B cell (primary cell): ENCODE measurements at regions of chr3 and their contacts with region 1.

Region 1: DNA sequence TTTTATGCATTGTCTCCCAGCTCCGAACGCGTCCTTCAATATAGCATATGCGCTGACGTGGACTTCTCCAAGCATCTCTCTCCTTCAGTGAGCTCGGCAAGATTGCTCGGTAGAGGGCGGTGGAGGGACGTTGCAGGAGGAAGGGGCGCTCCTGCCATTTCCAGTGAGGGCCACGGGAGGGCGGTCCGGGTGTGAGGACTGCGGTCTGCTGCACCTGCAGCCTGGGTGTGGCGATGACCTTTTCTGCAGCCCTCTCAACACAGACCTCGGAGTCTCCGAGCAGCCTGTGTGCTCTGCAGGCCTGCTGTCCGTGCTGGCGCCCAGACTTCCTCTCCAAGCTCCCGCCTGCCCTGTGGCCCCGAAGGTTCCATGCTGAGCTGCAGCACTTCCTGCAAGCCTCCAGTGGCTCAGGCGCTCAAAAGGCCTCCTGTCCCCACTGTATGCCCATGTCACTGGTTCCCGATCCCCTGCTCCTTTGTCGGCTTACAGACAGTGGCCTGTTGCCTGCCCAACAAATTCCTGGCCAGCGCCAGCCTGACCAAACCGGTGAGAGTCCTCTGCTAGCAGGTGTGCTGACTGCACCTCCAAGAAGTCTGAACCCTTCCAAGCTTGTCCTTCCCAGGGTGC is 8.9 kb upstream of the RTP3 start:
- DNase-seq: peak; percentile 95
- ATAC-seq: peak; percentile 99
- H3K4me3 ChIP-seq: no peak overlapping the region
- H3K4me3 Mint-ChIP-seq: peak overlapping the region; percentile 67
- H3K27ac ChIP-seq: no peak overlapping the region
- H3K27ac Mint-ChIP-seq: peak overlapping the region; percentile 74
- H3K4me1 ChIP-seq: peaks cover 9 to 11% of the 10 kb centered on the region in 2 donors
- H3K4me1 Mint-ChIP-seq: peaks cover 9% of the 10 kb centered on the region
- H3K27me3 ChIP-seq: peaks cover 0 to 6% (median 4%) of the 10 kb centered on the region in 4 experiments
- H3K27me3 Mint-ChIP-seq: peaks cover 3% of the 10 kb centered on the region
- CTCF ChIP-seq: peak; percentile 100

Region 2: GRCh38 chr3:46368569-46368968 is 120.3 kb before region 1 on chr3:
- CTCF ChIA-PET with region 1: interaction called, 10 read pairs
- POLR2A ChIA-PET with region 1: no interaction called
- intact Hi-C with region 1: no loop called
- DNase-seq: peak; percentile 79
- ATAC-seq: peak; percentile 93
- H3K4me3 ChIP-seq: no peak overlapping the region
- H3K4me3 Mint-ChIP-seq: peak overlapping the region; percentile 33
- H3K27ac ChIP-seq: no peak overlapping the region
- H3K27ac Mint-ChIP-seq: peak overlapping the region; percentile 28
- H3K4me1 ChIP-seq: peaks cover 12 to 20% of the 10 kb centered on the region in 2 donors
- H3K4me1 Mint-ChIP-seq: peaks cover 32% of the 10 kb centered on the region
- H3K27me3 ChIP-seq: no peaks in the 10 kb centered on the region
- H3K27me3 Mint-ChIP-seq: no peaks in the 10 kb centered on the region
- CTCF ChIP-seq: peak; percentile 57

Region 3: GRCh38 chr3:46477145-46477544 is 11.7 kb before region 1 on chr3:
- CTCF ChIA-PET with region 1: interaction called, 15 read pairs
- POLR2A ChIA-PET with region 1: no interaction called
- intact Hi-C with region 1: no loop called
- DNase-seq: no peak
- ATAC-seq: no peak
- H3K4me3 ChIP-seq: no peak overlapping the region
- H3K4me3 Mint-ChIP-seq: no peak overlapping the region
- H3K27ac ChIP-seq: no peak overlapping the region
- H3K27ac Mint-ChIP-seq: no peak overlapping the region
- H3K4me1 ChIP-seq: no peaks in the 10 kb centered on the region
- H3K4me1 Mint-ChIP-seq: no peaks in the 10 kb centered on the region
- H3K27me3 ChIP-seq: peaks cover 0 to 14% (median 9%) of the 10 kb centered on the region in 4 experiments
- H3K27me3 Mint-ChIP-seq: peaks cover 48% of the 10 kb centered on the region
- CTCF ChIP-seq: no peak

Region 4: GRCh38 chr3:46533091-46533490 is 44.2 kb after region 1 on chr3:
- CTCF ChIA-PET with region 1: interaction called, 156 read pairs
- POLR2A ChIA-PET with region 1: interaction called, 26 read pairs
- intact Hi-C with region 1: no loop called
- DNase-seq: no peak
- ATAC-seq: no peak
- H3K4me3 ChIP-seq: no peak overlapping the region
- H3K4me3 Mint-ChIP-seq: no peak overlapping the region
- H3K27ac ChIP-seq: no peak overlapping the region
- H3K27ac Mint-ChIP-seq: no peak overlapping the region
- H3K4me1 ChIP-seq: peaks cover 19 to 21% of the 10 kb centered on the region in 2 donors
- H3K4me1 Mint-ChIP-seq: peaks cover 26% of the 10 kb centered on the region
- H3K27me3 ChIP-seq: peaks cover 0 to 13% (median 5%) of the 10 kb centered on the region in 4 experiments
- H3K27me3 Mint-ChIP-seq: peaks cover 21% of the 10 kb centered on the region
- CTCF ChIP-seq: no peak

Region 5: GRCh38 chr3:46549408-46549904 is 60.6 kb after region 1 on chr3:
- CTCF ChIA-PET with region 1: interaction called, 34 read pairs
- POLR2A ChIA-PET with region 1: interaction called, 4 read pairs
- intact Hi-C with region 1: no loop called
- DNase-seq: peak; percentile 20
- ATAC-seq: peak; percentile 17
- H3K4me3 ChIP-seq: no peak overlapping the region
- H3K4me3 Mint-ChIP-seq: no peak overlapping the region
- H3K27ac ChIP-seq: no peak overlapping the region
- H3K27ac Mint-ChIP-seq: no peak overlapping the region
- H3K4me1 ChIP-seq: peaks cover 9 to 16% of the 10 kb centered on the region in 2 donors
- H3K4me1 Mint-ChIP-seq: peaks cover 34% of the 10 kb centered on the region
- H3K27me3 ChIP-seq: peaks cover 0 to 6% (median 0%) of the 10 kb centered on the region in 4 experiments
- H3K27me3 Mint-ChIP-seq: peaks cover 7% of the 10 kb centered on the region
- CTCF ChIP-seq: no peak

Region 6: GRCh38 chr3:46565607-46566035 is 76.8 kb after region 1 on chr3:
- CTCF ChIA-PET with region 1: interaction called, 275 read pairs
- POLR2A ChIA-PET with region 1: no interaction called
- intact Hi-C with region 1: no loop called
- DNase-seq: no peak
- ATAC-seq: no peak
- H3K4me3 ChIP-seq: peak overlapping the region in 3 of 5 experiments; percentile 33 to 59 (median 40)
- H3K4me3 Mint-ChIP-seq: peak overlapping the region; percentile 76
- H3K27ac ChIP-seq: no peak overlapping the region
- H3K27ac Mint-ChIP-seq: no peak overlapping the region
- H3K4me1 ChIP-seq: peaks cover 14 to 15% of the 10 kb centered on the region in 2 donors
- H3K4me1 Mint-ChIP-seq: peaks cover 13% of the 10 kb centered on the region
- H3K27me3 ChIP-seq: peaks cover 0 to 30% (median 21%) of the 10 kb centered on the region in 4 experiments
- H3K27me3 Mint-ChIP-seq: peaks cover 41% of the 10 kb centered on the region
- CTCF ChIP-seq: no peak

Region 7: GRCh38 chr3:46695177-46695961 is 206.5 kb after region 1 on chr3:
- CTCF ChIA-PET with region 1: interaction called, 7 read pairs
- POLR2A ChIA-PET with region 1: no interaction called
- intact Hi-C with region 1: loop called (anchors 10 kb)
- DNase-seq: peak; percentile 49
- ATAC-seq: no peak
- H3K4me3 ChIP-seq: no peak overlapping the region
- H3K4me3 Mint-ChIP-seq: peak overlapping the region; percentile 56
- H3K27ac ChIP-seq: no peak overlapping the region
- H3K27ac Mint-ChIP-seq: peak overlapping the region; percentile 7
- H3K4me1 ChIP-seq: peaks cover 33 to 38% of the 10 kb centered on the region in 2 donors
- H3K4me1 Mint-ChIP-seq: peaks cover 28% of the 10 kb centered on the region
- H3K27me3 ChIP-seq: peaks cover 0 to 35% (median 8%) of the 10 kb centered on the region in 4 experiments
- H3K27me3 Mint-ChIP-seq: peaks cover 9% of the 10 kb centered on the region
- CTCF ChIP-seq: peak; percentile 43

Region 8: GRCh38 chr3:47024932-47025331 is 536.1 kb after region 1 on chr3:
- CTCF ChIA-PET with region 1: no interaction called
- POLR2A ChIA-PET with region 1: no interaction called
- intact Hi-C with region 1: no loop called
- DNase-seq: no peak
- ATAC-seq: no peak
- H3K4me3 ChIP-seq: no peak overlapping the region
- H3K4me3 Mint-ChIP-seq: no peak overlapping the region
- H3K27ac ChIP-seq: no peak overlapping the region
- H3K27ac Mint-ChIP-seq: no peak overlapping the region
- H3K4me1 ChIP-seq: no peaks in the 10 kb centered on the region
- H3K4me1 Mint-ChIP-seq: peaks cover 23% of the 10 kb centered on the region
- H3K27me3 ChIP-seq: no peaks in the 10 kb centered on the region
- H3K27me3 Mint-ChIP-seq: no peaks in the 10 kb centered on the region
- CTCF ChIP-seq: no peak

Region 9: DNA sequence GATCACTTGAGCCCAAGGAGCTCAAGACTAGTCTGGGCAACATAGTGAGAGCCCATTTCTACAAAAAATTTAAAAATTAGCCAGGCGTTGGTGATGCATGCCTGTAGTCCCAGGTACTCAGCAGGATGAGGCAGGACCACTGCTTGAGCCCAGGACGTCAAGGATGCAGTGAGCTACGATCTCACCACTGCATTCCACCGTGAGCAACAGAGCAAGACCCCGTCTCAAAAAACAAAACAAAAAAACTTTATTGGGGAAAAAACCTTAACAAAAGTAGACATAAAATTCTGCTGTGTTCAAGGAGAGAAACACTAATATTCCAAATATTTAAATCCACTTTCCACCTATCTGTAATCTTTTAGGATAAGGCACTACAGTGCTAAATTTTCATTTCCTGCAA is 654.2 kb after region 1 on chr3:
- CTCF ChIA-PET with region 1: no interaction called
- POLR2A ChIA-PET with region 1: no interaction called
- intact Hi-C with region 1: no loop called
- DNase-seq: no peak
- ATAC-seq: no peak
- H3K4me3 ChIP-seq: no peak overlapping the region
- H3K4me3 Mint-ChIP-seq: no peak overlapping the region
- H3K27ac ChIP-seq: no peak overlapping the region
- H3K27ac Mint-ChIP-seq: no peak overlapping the region
- H3K4me1 ChIP-seq: peaks cover 12 to 29% of the 10 kb centered on the region in 2 donors
- H3K4me1 Mint-ChIP-seq: peaks cover 60% of the 10 kb centered on the region
- H3K27me3 ChIP-seq: no peaks in the 10 kb centered on the region
- H3K27me3 Mint-ChIP-seq: no peaks in the 10 kb centered on the region
- CTCF ChIP-seq: no peak

Region 10: GRCh38 chr3:47731061-47731460 is 1242.2 kb after region 1 on chr3:
- CTCF ChIA-PET with region 1: no interaction called
- POLR2A ChIA-PET with region 1: no interaction called
- intact Hi-C with region 1: no loop called
- DNase-seq: no peak
- ATAC-seq: no peak
- H3K4me3 ChIP-seq: no peak overlapping the region
- H3K4me3 Mint-ChIP-seq: no peak overlapping the region
- H3K27ac ChIP-seq: no peak overlapping the region
- H3K27ac Mint-ChIP-seq: no peak overlapping the region
- H3K4me1 ChIP-seq: peaks cover 0 to 4% of the 10 kb centered on the region in 2 donors
- H3K4me1 Mint-ChIP-seq: peaks cover 7% of the 10 kb centered on the region
- H3K27me3 ChIP-seq: no peaks in the 10 kb centered on the region
- H3K27me3 Mint-ChIP-seq: no peaks in the 10 kb centered on the region
- CTCF ChIP-seq: no peak